ENCODE measurements at regions of chr10 and their contacts with region 1.

Region 1: GRCh38 chr10:11472158-11472753 is 139.2 kb downstream of the USP6NL start:
- DNase-seq: peak; percentile 86
- ATAC-seq: peak; percentile 95
- H3K4me3 Mint-ChIP-seq: no peak overlapping the region
- H3K27ac Mint-ChIP-seq: no peak overlapping the region
- H3K4me1 Mint-ChIP-seq: peaks cover 1% of the 10 kb centered on the region
- H3K27me3 Mint-ChIP-seq: no peaks in the 10 kb centered on the region

Region 2: GRCh38 chr10:10233229-10233628 is 1239.0 kb before region 1 on chr10:
- CTCF ChIA-PET with region 1: no interaction called
- POLR2A ChIA-PET with region 1: no interaction called
- intact Hi-C with region 1: loop called in 1 of 2 experiments (anchors 5 kb)
- DNase-seq: no peak
- ATAC-seq: no peak
- H3K4me3 Mint-ChIP-seq: no peak overlapping the region
- H3K27ac Mint-ChIP-seq: no peak overlapping the region
- H3K4me1 Mint-ChIP-seq: no peaks in the 10 kb centered on the region
- H3K27me3 Mint-ChIP-seq: peaks cover 17% of the 10 kb centered on the region

Region 3: DNA sequence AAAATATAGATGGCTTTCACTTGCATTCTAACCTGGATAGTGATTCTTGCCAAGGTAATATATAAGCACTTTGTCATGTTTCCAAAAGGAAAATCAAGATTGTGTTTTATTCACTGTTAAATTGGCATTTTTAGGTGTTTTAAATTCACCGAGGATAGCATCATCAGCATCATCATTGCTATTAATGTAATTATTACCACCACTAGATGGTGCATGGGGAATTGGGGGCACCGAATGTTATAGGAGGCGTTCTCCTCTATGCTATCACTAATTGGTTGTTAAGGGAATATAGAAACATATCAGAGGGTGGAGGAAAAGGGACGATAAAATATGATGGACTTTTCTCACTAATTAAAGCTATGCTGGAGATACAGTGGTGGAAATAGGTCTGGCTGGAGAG is 359.1 kb before region 1 on chr10:
- CTCF ChIA-PET with region 1: interaction called, 3 read pairs
- POLR2A ChIA-PET with region 1: no interaction called
- intact Hi-C with region 1: loop called in 1 of 2 experiments (anchors 5 kb)
- DNase-seq: peak; percentile 21
- ATAC-seq: peak; percentile 44
- H3K4me3 Mint-ChIP-seq: no peak overlapping the region
- H3K27ac Mint-ChIP-seq: no peak overlapping the region
- H3K4me1 Mint-ChIP-seq: peaks cover 34% of the 10 kb centered on the region
- H3K27me3 Mint-ChIP-seq: no peaks in the 10 kb centered on the region

Region 4: GRCh38 chr10:11178606-11179515 is 293.4 kb before region 1 on chr10:
- CTCF ChIA-PET with region 1: no interaction called
- POLR2A ChIA-PET with region 1: no interaction called
- intact Hi-C with region 1: loop called in 1 of 2 experiments (anchors 10 kb)
- DNase-seq: peak; percentile 90
- ATAC-seq: peak; percentile 72
- H3K4me3 Mint-ChIP-seq: no peak overlapping the region
- H3K27ac Mint-ChIP-seq: no peak overlapping the region
- H3K4me1 Mint-ChIP-seq: peaks cover 94% of the 10 kb centered on the region
- H3K27me3 Mint-ChIP-seq: no peaks in the 10 kb centered on the region

Region 5: GRCh38 chr10:11330383-11331045 is 141.7 kb before region 1 on chr10:
- CTCF ChIA-PET with region 1: no interaction called
- POLR2A ChIA-PET with region 1: no interaction called
- intact Hi-C with region 1: loop called in 1 of 2 experiments (anchors 5 kb)
- DNase-seq: no peak
- ATAC-seq: no peak
- H3K4me3 Mint-ChIP-seq: no peak overlapping the region
- H3K27ac Mint-ChIP-seq: peak overlapping the region; percentile 23
- H3K4me1 Mint-ChIP-seq: peaks cover 76% of the 10 kb centered on the region
- H3K27me3 Mint-ChIP-seq: no peaks in the 10 kb centered on the region

Region 6: GRCh38 chr10:11411926-11412545 is 60.2 kb before region 1 on chr10:
- CTCF ChIA-PET with region 1: no interaction called
- POLR2A ChIA-PET with region 1: no interaction called
- intact Hi-C with region 1: loop called in 1 of 2 experiments (anchors 5 kb)
- DNase-seq: no peak
- ATAC-seq: no peak
- H3K4me3 Mint-ChIP-seq: no peak overlapping the region
- H3K27ac Mint-ChIP-seq: no peak overlapping the region
- H3K4me1 Mint-ChIP-seq: peaks cover 16% of the 10 kb centered on the region
- H3K27me3 Mint-ChIP-seq: no peaks in the 10 kb centered on the region

Region 7: DNA sequence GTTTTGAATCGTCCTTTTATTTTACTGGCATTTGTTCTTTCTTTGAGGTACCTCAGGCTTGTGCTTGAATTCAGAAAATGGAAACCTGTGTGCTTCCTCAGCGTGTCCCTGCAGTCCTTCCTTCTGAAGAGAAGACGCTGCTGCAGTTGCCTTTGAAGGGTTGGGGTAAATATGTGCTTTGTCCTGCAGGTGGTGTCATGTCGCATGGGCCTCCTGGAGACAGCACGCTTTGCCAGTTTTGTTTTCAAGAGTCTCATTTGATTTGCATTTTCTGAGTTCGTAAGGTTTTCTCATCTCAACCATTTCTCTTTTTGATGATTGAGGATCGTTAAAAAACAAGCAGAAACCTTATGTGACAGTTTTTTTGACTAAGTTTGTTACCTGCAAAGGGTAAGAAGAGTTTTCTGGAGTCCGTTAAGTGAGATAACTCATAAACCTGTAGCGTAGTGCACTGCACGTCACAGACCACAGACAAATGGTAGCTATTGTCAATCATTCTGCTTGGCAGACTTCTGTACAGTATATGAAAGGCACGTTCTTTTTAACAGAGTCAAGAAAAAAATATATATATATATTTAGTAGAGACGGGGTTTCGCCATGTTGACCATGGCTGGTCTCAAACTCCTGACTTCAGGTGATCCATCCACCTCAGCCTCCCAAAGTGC is 780.8 kb after region 1 on chr10:
- CTCF ChIA-PET with region 1: no interaction called
- POLR2A ChIA-PET with region 1: no interaction called
- intact Hi-C with region 1: no loop called
- DNase-seq: peak; percentile 45
- ATAC-seq: peak; percentile 55
- H3K4me3 Mint-ChIP-seq: no peak overlapping the region
- H3K27ac Mint-ChIP-seq: no peak overlapping the region
- H3K4me1 Mint-ChIP-seq: no peaks in the 10 kb centered on the region
- H3K27me3 Mint-ChIP-seq: no peaks in the 10 kb centered on the region